GM13977 (cell line): ENCODE measurements at regions of chr13 and their contacts with region 1.

Region 1: DNA sequence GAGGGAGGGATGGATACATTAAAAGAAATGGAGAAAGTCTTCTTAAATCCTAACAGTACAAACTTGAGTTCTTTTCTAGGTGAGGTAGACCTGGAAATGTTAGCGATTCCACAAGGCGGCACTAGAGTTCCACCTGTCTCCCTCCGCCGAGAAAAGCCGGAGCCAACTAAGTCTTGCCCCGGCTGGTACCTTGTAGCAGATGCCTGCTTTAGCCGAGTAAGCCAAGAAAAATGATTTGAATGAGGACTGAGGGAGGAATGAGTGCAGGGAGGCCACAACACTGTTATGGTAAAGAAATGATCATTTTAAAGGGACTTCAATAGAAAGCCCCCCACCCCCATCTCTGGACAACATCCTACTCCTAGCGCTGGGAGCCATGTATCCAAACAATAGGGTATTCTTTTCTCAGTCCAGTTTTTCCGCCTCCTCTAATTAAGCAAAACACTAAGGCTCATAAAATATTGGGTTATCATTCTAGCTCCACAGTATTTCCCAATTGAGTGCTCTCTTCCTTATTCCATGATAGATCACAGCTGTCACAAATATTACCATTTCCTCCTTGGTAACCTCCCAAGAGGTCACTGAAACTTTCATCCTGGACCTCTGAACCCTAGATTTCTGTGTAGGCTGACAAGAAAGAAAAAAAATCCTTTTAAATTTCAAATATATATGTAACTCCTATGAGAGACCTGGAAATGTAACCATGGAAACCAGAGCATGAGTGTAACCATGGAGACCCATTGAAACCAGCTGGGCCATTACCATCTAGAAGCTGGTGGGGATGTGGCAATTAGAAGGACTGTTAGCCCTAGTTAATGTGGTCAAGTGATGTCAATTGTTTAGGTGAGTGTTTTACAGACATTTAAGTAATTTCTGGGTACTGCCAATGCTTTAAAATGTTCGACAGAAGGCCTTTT is 58.3 kb downstream of the GPALPP1 start:
- DNase-seq: peak; percentile 79
- CTCF ChIP-seq: peak; percentile 86

Region 2: DNA sequence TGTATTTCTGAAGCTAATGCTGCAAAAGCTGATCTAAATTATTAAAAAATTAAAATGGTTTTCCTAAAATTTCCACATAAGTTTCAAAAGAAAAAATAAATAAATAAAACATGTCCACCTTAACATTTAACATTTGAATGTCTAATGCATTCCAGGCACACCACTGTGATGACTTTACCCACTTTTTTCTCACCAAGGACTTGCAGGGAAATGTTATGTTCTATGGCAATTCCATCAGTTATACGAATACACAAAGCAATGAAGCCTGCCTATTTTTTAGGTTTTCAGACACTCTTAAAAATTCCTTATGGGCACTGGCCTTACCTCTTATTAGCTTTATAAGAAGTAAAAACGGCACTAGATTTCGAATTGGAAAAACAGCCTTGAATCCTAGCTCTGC is 481.8 kb before region 1 on chr13:
- in situ Hi-C with region 1: no loop called
- DNase-seq: no peak
- CTCF ChIP-seq: no peak

Region 3: GRCh38 chr13:45301243-45301642 is 253.6 kb after region 1 on chr13:
- in situ Hi-C with region 1: loop called (anchors 10 kb)
- DNase-seq: no peak
- CTCF ChIP-seq: no peak